ENCODE measurements at regions of chr6 and their contacts with region 1.

Region 1: DNA sequence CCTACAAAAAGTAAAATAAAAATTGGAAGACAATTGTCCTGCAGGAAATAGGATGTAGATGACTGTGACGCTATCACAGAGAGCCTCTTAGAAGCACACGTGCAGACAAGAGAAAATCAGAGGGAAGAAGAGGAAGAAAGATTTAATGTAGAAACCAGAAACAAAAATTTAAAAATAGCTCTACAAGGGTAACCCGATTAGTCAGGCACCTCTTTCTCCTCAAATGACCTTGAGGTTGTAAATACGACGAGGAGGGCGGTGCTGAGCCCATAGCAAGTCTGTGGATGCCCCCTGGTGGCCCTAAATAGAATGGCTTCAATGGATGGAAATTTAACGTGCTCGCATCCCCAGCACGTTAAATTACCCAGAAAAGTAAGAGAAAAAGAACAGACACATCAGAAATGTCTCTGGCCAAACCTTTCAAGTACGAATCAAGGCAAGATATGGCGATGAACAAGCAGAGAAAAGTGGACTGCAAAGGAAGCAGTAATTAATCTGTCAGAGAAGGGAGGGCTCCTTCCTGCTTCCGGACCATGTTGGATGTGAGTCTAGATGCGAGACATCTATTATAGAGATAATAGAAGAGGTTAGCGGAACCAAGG is 4.2 kb upstream of the PRPH2 start:
- DNase-seq: peak; percentile 86
- H3K4me3 ChIP-seq: peak overlapping the region in 1 of 2 experiments; percentile 10; a peak in 1 of 4 replicates
- H3K27ac ChIP-seq: peak overlapping the region; percentile 4 to 49; a peak in 2 of 4 replicates
- H3K4me1 ChIP-seq: peaks cover 0 to 7% of the 10 kb centered on the region in 2 experiments; a peak in 1 of 4 replicates
- H3K27me3 ChIP-seq: no peaks in the 10 kb centered on the region
- CTCF ChIP-seq: peak; percentile 92
- EP300 ChIP-seq: no peak
- RAD21 ChIP-seq: peak; percentile 92

Region 2: DNA sequence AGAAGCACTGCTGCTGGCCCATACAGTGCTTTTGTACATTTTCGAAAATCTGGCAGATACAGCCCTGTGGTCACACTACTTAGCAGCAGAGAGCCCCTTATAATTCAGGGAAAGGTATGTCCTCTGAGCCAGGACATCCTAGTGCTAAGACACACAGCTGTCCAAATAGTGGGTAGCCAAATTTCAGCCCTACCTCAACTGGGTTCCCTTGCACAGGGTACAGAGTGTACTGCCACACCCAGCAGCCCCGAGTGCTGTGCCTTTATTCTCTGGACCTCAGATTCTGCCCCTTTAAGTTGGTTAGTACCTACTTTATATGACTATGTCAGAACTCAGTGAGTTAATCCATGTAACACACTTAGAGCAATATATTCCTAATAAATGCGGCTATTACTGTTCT is 51.8 kb before region 1 on chr6:
- CTCF ChIA-PET with region 1: interaction called, 11 read pairs
- POLR2A ChIA-PET with region 1: no interaction called
- DNase-seq: no peak
- H3K4me3 ChIP-seq: no peak overlapping the region
- H3K27ac ChIP-seq: no peak overlapping the region
- H3K4me1 ChIP-seq: no peaks in the 10 kb centered on the region
- H3K27me3 ChIP-seq: no peaks in the 10 kb centered on the region
- CTCF ChIP-seq: no peak
- EP300 ChIP-seq: no peak
- RAD21 ChIP-seq: no peak

Region 3: GRCh38 chr6:42704241-42704936 is 22.2 kb before region 1 on chr6:
- CTCF ChIA-PET with region 1: interaction called, 17 read pairs
- POLR2A ChIA-PET with region 1: no interaction called
- DNase-seq: no peak
- H3K4me3 ChIP-seq: no peak overlapping the region
- H3K27ac ChIP-seq: no peak overlapping the region
- H3K4me1 ChIP-seq: no peaks in the 10 kb centered on the region
- H3K27me3 ChIP-seq: no peaks in the 10 kb centered on the region
- CTCF ChIP-seq: no peak
- EP300 ChIP-seq: no peak
- RAD21 ChIP-seq: no peak

Region 4: GRCh38 chr6:42745707-42746462 is 19.3 kb after region 1 on chr6 and contains the start of gene TBCC:
- CTCF ChIA-PET with region 1: interaction called, 19 read pairs
- POLR2A ChIA-PET with region 1: interaction called, 4 read pairs
- DNase-seq: peak; percentile 97
- H3K4me3 ChIP-seq: peak within 1 kb of the TSS; percentile 75 to 82
- H3K27ac ChIP-seq: peak within 1 kb of the TSS; percentile 93 to 96
- H3K4me1 ChIP-seq: peaks cover 19 to 30% of the 10 kb centered on the region in 2 experiments; a peak in 3 of 4 replicates
- H3K27me3 ChIP-seq: no peaks in the 10 kb centered on the region
- CTCF ChIP-seq: no peak
- EP300 ChIP-seq: peak in 1 of 2 experiments; percentile 14; a peak in 2 of 4 replicates
- RAD21 ChIP-seq: no peak
- polyA plus RNA-seq, gene TBCC: 12.7 and 18.2 TPM in 2 replicates

Measured in SK-N-SH (cell line).